HEK293 (cell line): ENCODE measurements at regions of chr6 and their contacts with region 1.

Region 1: DNA sequence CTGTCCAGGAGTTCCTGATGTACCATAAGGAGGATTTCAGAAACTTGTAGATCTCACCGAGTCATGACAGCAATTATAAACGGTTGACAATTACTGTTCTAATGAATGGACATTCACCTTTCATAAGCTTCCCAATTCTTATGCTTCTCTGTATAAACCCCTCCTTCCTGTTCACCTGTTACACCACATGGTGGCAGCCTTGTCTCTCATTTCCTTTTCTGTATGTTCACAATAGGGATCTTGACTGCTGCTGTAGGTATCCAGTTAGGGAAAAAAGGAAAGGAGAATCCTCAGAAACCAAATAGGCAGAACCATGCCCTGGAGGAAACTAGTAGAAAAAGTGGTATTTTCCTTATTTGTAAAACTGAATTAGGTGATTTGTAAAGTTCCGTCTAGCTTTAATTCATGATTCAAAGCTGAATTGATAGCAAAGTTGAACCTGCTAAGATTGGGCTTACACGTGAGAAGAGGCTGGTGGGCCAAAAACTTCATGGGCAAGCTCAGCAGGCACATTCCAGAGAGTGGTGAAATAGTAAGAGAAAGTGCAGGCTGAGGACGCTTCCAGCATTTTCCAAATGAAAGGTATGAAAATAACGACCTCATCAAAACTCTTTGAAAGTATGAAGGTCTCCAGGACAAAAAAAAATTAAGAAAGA is 29.0 kb upstream of the TBPL1 start:
- H3K4me3 ChIP-seq: no peak overlapping the region
- H3K27ac ChIP-seq: no peak overlapping the region
- H3K4me1 ChIP-seq: no peaks in the 10 kb centered on the region
- CTCF ChIP-seq: peak; percentile 86

Region 2: DNA sequence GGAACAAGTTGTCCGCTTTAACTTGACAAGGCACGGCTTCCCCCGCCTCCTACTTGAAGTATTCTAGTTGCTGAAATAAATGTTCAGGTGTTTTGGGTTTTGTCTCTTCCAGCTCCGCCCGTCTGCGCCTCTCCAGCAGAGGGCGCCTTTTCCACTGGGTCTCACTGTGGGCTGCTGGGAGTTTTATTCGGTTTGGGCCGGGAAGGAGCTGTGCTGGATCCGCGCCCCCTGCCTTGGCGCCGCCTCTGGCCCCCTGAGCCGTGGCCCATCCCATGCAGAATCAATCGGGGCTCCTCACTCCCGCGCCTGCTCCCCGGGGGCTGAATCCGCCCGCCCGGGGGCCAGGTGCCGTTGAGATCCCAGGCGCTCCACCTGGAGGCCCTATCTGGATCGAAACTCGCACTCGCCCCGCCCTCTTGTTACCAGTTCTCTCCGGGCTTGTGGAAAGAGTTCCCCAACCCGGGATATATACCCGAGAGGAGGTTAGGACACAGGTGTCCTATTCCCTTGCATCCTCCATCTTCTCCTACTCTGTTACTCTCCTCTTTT is 86.2 kb before region 1 on chr6:
- CTCF ChIA-PET with region 1: interaction called, 117 read pairs
- POLR2A ChIA-PET with region 1: no interaction called
- H3K4me3 ChIP-seq: peak overlapping the region; percentile 57
- H3K27ac ChIP-seq: peak overlapping the region; percentile 36; the same call in 1 of the 2 replicates
- H3K4me1 ChIP-seq: no peaks in the 10 kb centered on the region
- CTCF ChIP-seq: peak; percentile 96

Region 3: DNA sequence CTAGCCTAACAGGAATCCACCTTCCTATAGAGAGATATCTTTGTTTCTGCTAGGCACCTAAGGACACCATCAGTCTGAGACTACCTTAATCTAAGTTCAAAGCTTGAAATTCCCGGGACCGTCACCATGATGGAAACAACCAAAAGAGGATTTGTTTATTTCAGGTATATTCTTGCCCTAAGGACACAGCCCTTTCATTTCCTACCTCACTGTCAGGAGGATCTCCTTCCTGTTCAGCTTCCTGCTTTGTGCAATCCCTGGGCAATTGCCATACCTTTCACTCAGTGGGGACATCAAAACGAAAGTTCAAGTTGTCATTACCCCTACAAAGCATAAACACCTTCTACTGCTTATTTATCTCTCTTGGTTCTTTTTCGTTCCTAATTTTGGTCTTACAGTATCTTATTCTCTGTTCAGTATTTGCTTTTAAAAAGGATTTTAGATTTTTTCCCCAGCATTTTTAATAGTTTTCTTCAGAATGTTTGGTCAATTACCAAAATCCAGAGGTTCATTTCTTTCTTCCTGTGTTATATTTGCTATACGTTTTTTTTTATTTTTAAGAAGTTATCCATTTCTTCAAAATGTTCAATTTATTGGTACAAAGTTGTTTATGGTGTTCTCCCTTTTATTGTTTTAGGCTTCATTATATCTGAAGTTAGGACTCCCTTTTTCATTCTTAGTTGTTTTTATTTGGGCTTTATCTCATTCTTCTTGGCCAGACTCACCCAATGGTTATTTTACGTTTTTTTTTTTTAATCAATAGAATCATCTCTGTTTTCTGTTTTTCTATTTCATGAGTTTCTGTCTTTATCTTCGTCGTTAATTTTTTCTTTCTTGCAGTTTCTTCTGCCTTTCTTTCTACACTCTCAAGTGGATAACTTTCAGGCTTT is 16.0 kb after region 1 on chr6:
- CTCF ChIA-PET with region 1: interaction called, 22 read pairs
- POLR2A ChIA-PET with region 1: no interaction called
- H3K4me3 ChIP-seq: no peak overlapping the region
- H3K27ac ChIP-seq: no peak overlapping the region
- H3K4me1 ChIP-seq: no peaks in the 10 kb centered on the region
- CTCF ChIP-seq: no peak

Region 4: DNA sequence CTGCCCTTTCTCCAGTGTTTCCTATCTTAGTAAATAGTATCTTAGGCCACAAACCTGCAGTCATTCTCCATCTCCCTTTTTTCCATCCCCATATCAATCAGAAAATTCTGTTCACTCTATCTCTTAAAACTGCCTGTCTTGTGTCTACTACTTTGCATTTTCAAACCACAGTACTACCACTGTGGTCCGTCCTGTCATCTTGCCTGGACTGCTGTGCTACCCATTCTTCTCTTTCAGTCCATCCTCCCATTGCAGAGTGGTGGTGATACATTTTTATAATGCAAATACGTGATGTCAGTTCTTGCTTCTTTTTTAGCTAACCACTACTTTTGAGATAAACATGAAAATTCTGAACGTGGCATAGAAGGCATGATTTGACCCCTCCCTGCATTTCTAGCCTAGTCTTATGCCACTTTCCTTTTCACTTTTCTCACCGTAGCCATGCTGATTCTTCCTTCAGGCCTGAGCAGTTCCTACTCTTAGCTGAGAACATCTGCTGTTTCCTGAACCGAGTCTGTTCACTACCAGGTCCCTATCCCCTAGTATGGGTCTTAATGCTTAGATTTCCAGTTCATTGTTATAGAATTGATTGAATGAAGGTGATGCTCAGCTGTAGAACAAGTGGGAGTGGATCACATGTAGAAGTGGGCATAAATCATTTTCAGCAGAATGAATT is 42.7 kb after region 1 on chr6:
- CTCF ChIA-PET with region 1: interaction called, 26 read pairs
- POLR2A ChIA-PET with region 1: no interaction called
- H3K4me3 ChIP-seq: no peak overlapping the region
- H3K27ac ChIP-seq: no peak overlapping the region
- H3K4me1 ChIP-seq: peaks cover 12% of the 10 kb centered on the region
- CTCF ChIP-seq: no peak

Region 5: GRCh38 chr6:134063966-134064445 is 139.9 kb after region 1 on chr6:
- CTCF ChIA-PET with region 1: interaction called, 192 read pairs
- POLR2A ChIA-PET with region 1: no interaction called
- H3K4me3 ChIP-seq: no peak overlapping the region
- H3K27ac ChIP-seq: no peak overlapping the region
- H3K4me1 ChIP-seq: no peaks in the 10 kb centered on the region
- CTCF ChIP-seq: peak; percentile 91

Region 6: DNA sequence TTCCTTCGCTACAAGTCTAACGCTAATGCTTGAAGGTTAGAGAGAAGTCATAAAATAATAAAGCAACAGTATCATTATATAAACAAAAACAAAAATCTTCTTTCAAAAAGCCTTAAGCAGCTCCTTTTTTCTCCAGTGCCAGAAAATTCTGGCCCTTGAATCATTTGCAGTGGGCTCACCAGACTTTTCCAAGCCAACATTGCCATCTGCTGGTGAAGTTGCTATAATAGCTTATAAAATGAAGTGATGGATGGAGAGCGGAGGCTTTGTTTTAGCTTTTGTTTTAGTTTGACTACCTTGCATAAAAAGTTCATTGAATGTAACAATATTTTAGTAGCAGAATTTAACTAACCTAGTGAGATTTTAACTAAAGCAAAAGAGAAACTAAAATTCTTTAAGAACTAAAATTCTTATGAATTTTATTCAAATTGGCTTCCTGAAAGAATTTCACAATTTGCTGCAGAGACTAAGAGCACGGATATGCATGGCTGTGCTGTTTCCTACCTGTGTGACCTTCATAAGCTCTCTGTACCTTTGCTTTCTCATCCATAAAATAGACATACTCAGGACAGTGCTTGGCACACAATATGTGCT is 173.1 kb after region 1 on chr6:
- CTCF ChIA-PET with region 1: interaction called, 693 read pairs
- POLR2A ChIA-PET with region 1: interaction called, 15 read pairs
- H3K4me3 ChIP-seq: no peak overlapping the region
- H3K27ac ChIP-seq: no peak overlapping the region
- H3K4me1 ChIP-seq: no peaks in the 10 kb centered on the region
- CTCF ChIP-seq: peak; percentile 32; the same call in 1 of the 2 replicates

Region 7: DNA sequence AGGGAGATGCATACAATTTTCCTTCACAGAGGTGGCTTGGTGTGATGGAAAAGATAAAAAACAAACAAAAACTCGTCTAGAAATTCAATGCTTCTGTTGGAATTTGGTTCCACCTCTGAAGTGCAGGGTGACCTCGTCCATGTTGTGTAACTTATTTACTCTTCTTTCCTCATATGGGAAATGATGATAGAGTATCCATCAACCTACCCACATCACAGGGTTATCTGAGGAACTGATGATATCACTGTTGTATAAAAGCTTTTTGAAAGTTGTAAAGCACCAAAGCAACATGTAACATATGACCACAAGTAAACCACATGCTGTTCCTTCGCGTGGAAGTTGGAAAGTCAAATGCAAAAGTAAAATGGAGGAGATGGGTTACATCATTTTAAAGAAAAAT is 605.9 kb after region 1 on chr6:
- CTCF ChIA-PET with region 1: no interaction called
- POLR2A ChIA-PET with region 1: no interaction called
- H3K4me3 ChIP-seq: no peak overlapping the region
- H3K27ac ChIP-seq: no peak overlapping the region
- H3K4me1 ChIP-seq: no peaks in the 10 kb centered on the region
- CTCF ChIP-seq: no peak

Region 8: DNA sequence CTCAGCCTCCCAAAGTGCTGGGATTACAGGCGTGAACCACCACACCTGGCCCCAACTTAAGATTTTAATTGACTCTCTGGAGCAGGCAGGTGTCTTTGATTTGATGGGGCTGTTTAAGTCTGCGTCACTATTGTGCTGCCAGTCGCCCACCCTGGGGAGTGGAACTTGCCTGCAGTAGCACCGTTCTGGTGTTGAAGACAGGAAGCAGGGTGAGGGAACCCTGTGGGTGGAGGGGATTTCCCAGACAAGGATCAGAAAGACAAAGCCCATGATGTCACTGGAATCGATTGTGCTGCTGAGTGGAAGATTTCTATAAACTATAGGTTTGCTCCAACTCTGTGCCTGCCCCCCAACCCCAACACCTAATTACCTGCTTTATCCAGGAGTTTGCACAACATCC is 1014.8 kb after region 1 on chr6:
- CTCF ChIA-PET with region 1: interaction called, 15 read pairs
- POLR2A ChIA-PET with region 1: no interaction called
- H3K4me3 ChIP-seq: no peak overlapping the region
- H3K27ac ChIP-seq: no peak overlapping the region
- H3K4me1 ChIP-seq: peaks cover 4% of the 10 kb centered on the region; the same call in 1 of the 2 replicates
- CTCF ChIP-seq: no peak